Aorta (tissue), 5 donors: ENCODE measurements at regions of chr18 and their contacts with region 1.

Region 1: DNA sequence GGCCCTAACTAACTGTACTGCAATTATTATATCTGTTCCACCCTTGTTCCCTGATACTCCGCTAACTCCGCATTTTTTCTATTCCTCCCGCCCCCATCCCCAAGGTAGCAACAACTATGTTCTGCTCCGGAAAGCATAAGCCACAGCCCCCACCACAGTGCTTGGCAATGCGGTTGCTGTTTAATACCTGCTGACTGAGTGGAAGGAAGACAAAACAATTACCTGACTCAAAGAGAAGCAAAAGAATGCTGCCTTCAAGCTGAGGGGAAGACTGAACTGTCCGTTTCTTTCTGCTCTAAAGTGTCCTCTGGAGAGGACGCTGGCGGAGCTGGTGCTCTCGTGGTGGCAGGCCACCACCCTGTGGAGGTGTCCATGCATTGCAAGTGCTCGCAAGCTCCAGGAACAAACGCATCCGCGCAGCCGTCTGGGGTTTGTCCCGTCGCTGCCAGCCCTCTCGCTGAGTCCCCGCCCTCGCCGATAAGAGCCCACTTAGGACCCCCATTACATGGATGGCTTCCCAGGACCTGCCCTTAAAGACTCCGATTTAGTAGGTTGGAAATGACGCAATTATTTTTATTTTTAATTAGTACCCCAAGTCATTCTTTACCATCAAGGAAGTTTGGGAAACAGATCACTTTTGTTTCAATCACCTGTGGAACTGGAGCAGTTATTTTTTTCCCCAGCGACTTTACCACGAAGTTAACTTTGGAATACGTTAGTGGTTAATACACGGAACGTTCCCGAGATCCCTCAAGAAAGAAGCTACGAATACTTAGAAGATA is 1.6 kb upstream of the MYL12A start:
- DNase-seq: peak; percentile 94
- ATAC-seq: peak; percentile 92
- H3K4me3 ChIP-seq: peak overlapping the region; percentile 84 to 93
- H3K27ac ChIP-seq: peak overlapping the region; percentile 91 to 99
- H3K4me1 ChIP-seq: peaks cover 0 to 1% of the 10 kb centered on the region in 2 donors
- H3K27me3 ChIP-seq: no peaks in the 10 kb centered on the region

Region 2: DNA sequence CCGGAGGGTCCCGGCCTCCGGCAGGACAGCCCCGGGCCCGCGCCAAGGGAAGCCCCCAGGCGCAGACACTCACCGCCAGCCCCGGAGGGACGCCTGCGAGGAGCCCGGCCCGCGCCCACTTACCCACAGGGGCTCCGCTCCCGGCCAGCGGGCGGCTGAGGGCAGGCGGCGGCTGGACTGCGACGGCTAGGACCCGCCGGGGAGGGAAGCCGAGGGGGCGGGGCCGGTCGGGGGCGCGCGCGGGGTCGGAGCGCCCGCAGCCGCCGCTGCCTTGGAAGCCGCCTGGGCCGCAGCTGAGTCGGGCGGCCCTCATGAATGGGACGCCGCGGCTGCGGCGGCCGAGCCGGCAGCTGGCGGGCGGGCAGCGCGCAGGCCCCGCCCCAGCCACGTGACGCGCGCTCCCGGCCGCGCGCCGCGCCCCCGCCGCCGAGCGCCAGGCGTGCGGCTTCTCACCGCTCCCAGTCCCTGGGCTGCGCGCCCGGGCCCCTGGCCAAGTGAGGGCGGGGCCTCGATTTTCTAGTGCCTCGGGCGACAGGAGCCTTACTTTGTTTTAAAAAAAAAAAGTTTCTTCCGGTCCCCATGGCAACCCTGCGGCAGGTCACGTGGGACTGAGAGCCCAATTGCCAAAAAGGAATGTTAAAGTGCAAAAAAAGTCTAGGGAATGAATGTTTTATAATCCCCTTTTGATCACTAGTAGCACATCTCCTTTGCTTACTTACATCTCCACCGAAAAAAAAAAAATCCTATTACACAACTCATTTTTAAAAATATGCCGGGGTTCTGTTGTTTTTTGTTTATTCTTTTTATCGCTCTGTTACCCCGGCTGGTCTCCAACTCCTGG is 232.9 kb before region 1 on chr18 and contains the start of gene LPIN2:
- intact Hi-C with region 1: loop called in 1 of 2 experiments (anchors 10 kb)
- DNase-seq: peak; percentile 99 to 100
- ATAC-seq: peak; percentile 94
- H3K4me3 ChIP-seq: peak within 1 kb of the TSS; percentile 97 to 98
- H3K27ac ChIP-seq: peak within 1 kb of the TSS; percentile 95
- H3K4me1 ChIP-seq: peaks cover 0 to 4% of the 10 kb centered on the region in 2 donors
- H3K27me3 ChIP-seq: no peaks in the 10 kb centered on the region
- total RNA-seq, gene LPIN2: 34.8 to 42.4 TPM

Region 3: DNA sequence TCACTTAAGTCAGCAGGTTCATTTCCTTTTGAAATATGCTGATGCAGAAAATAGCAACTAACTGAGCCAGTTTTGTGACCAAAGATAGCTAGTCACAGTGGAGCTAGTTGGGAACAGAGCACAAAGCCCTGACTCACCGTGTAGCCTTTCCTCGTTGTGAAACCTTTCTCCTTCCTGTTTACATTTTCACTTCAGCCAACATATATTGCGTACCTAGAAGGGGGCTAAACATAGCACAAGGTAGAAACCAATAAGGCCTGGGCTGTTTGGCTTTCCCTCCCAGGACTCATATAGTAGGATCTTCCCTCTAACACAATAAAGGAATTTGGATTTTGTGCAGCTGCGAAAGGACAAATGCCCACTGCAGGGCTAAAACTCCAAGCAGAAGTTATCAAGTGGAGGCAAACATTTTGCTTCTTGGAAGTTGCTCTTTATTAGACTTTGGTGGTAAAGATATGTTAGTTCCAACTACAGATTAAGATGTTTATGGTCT is 208.6 kb before region 1 on chr18:
- intact Hi-C with region 1: no loop called
- DNase-seq: peak in 1 of 2 donors; percentile 57
- ATAC-seq: peak; percentile 60
- H3K4me3 ChIP-seq: no peak overlapping the region
- H3K27ac ChIP-seq: peak overlapping the region in 1 of 2 donors; percentile 33
- H3K4me1 ChIP-seq: no peaks in the 10 kb centered on the region
- H3K27me3 ChIP-seq: no peaks in the 10 kb centered on the region

Region 4: GRCh38 chr18:3151399-3152264 is 94.4 kb before region 1 on chr18:
- intact Hi-C with region 1: loop called (anchors 2 to 5 kb)
- DNase-seq: no peak
- ATAC-seq: no peak
- H3K4me3 ChIP-seq: no peak overlapping the region
- H3K27ac ChIP-seq: no peak overlapping the region
- H3K4me1 ChIP-seq: no peaks in the 10 kb centered on the region
- H3K27me3 ChIP-seq: no peaks in the 10 kb centered on the region

Region 5: GRCh38 chr18:3885209-3885792 is 639.3 kb after region 1 on chr18:
- intact Hi-C with region 1: no loop called
- DNase-seq: no peak
- ATAC-seq: no peak
- H3K4me3 ChIP-seq: no peak overlapping the region
- H3K27ac ChIP-seq: no peak overlapping the region
- H3K4me1 ChIP-seq: no peaks in the 10 kb centered on the region
- H3K27me3 ChIP-seq: no peaks in the 10 kb centered on the region